ENCODE measurements at regions of chr3 and their contacts with region 1.

Region 1: GRCh38 chr3:72447059-72447946 is 400.9 kb downstream of the SHQ1 start:
- DNase-seq: peak; percentile 78 to 96 (median 89)
- H3K4me3 ChIP-seq: peak overlapping the region; percentile 61 to 96 (median 87)
- H3K27ac ChIP-seq: peak overlapping the region; percentile 45 to 96 (median 88)
- H3K27me3 ChIP-seq: no peaks in the 10 kb centered on the region
- CTCF ChIP-seq: peak in 3 of 56 donors; percentile 10 to 18 (median 11)

Region 2: GRCh38 chr3:71955240-71956068 is 491.8 kb before region 1 on chr3:
- intact Hi-C with region 1: loop called (anchors 5 to 10 kb)
- DNase-seq: peak; percentile 66 to 87 (median 84)
- H3K4me3 ChIP-seq: peak overlapping the region in 22 of 59 donors; percentile 3 to 44 (median 20)
- H3K27ac ChIP-seq: peak overlapping the region in 42 of 59 donors; percentile 3 to 86 (median 52)
- H3K27me3 ChIP-seq: no peaks in the 10 kb centered on the region
- CTCF ChIP-seq: peak; percentile 68 to 95 (median 88)

Region 3: GRCh38 chr3:72177083-72178050 is 269.9 kb before region 1 on chr3:
- intact Hi-C with region 1: loop called in 1 of 2 experiments (anchors 10 kb)
- DNase-seq: peak in 5 of 10 donors; percentile 34 to 52 (median 48)
- H3K4me3 ChIP-seq: peak overlapping the region in 52 of 59 donors; percentile 3 to 54 (median 31)
- H3K27ac ChIP-seq: peak overlapping the region in 55 of 59 donors; percentile 0 to 99 (median 71)
- H3K27me3 ChIP-seq: no peaks in the 10 kb centered on the region
- CTCF ChIP-seq: no peak

Region 4: DNA sequence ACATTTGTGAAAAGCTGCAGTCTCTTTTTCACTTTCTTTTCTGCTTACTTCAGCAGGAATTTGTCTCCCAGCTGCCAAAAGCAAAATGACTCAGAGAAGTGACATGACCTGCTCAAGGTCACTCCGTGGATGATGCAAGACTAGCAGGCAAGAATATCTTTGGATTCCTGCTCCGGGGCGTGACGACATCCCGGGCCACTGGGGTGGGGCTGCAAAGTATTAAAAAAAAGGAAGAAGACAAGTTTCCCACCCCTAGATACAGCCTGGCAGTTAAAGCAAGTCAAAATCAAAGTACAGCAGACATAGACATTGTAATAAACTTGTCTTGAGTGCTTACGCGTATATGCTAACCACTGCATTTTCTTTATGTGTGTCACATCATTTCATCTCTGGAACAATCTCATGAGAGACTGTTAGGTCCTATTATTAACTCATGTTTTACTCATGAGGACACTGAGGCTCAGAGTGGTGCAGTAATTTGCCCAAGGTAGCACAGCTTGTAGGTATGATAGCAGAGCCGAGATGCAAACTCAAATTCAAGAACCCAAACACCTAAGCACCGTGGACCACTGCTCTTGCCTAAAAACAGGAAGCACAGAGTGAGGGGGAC is 177.1 kb before region 1 on chr3:
- intact Hi-C with region 1: loop called (anchors 2 to 10 kb)
- DNase-seq: peak in 1 of 10 donors; percentile 31
- H3K4me3 ChIP-seq: no peak overlapping the region
- H3K27ac ChIP-seq: peak overlapping the region in 40 of 59 donors; percentile 0 to 99 (median 90)
- H3K27me3 ChIP-seq: no peaks in the 10 kb centered on the region
- CTCF ChIP-seq: no peak

Region 5: DNA sequence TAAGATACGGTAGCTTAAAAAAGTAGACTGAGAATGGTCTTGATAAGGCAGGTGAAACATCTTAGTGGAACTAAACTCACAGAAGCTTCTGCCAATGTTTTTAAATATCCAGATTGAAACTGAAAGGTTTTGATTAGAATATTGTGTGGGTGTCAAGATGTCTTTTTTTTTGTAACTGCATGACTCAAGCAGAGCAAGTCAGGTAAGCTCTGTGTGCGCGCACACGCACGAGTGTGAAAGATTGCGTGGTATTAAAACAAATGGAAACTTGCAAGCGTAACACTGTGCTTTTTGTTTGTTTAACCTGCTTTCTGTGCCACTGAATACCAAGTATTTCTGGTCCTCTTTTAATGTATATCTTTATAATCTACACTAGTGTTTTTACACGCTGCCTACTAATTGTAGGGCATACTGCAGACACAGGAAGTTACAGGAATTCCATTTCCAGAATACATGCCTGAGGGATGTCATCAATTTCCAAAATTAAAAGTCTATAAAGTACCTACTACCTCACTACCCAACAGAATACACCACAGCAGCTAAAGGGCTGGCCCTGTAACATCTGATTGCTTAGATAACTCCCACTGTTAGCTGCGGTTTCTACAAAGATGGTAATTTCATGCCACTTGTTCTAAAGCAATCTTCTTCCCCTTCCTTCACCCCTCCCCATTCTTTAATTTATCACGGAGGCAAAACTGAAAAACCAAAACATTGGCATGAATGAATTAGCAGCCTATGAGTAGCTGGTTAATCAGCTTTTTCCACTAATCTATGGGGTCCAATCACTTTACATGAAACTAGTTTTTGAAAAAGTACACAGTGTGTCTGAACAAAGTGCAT is 71.8 kb before region 1 on chr3:
- intact Hi-C with region 1: loop called (anchors 2 to 5 kb)
- DNase-seq: no peak
- H3K4me3 ChIP-seq: no peak overlapping the region
- H3K27ac ChIP-seq: peak overlapping the region in 55 of 59 donors; percentile 1 to 99 (median 94)
- H3K27me3 ChIP-seq: no peaks in the 10 kb centered on the region
- CTCF ChIP-seq: no peak

Region 6: GRCh38 chr3:72679540-72680198 is 232.4 kb after region 1 on chr3:
- intact Hi-C with region 1: no loop called
- DNase-seq: peak in 2 of 10 donors; percentile 41 to 49
- H3K4me3 ChIP-seq: no peak overlapping the region
- H3K27ac ChIP-seq: peak overlapping the region in 53 of 59 donors; percentile 7 to 88 (median 63)
- H3K27me3 ChIP-seq: no peaks in the 10 kb centered on the region
- CTCF ChIP-seq: no peak

Region 7: DNA sequence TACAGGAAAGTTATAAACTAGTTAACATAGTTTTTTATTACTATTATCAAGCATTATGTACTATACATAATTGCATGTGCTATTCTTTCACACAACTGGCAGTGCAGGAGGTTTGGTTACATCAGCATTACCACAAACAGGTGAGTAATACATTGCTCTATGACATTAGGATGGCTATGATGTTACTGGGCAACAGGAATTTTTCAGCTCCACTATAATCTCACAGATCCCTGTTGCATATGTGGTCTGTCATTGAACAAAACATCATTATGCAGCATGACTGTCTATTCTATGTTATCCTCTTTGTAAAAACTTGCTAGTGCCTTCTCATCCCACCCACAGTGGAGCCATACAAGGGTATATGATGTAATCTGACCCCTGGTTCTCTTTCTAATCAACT is 1214.0 kb after region 1 on chr3:
- intact Hi-C with region 1: no loop called
- DNase-seq: no peak
- H3K4me3 ChIP-seq: no peak overlapping the region
- H3K27ac ChIP-seq: no peak overlapping the region
- H3K27me3 ChIP-seq: peaks cover 0 to 3% (median 0%) of the 10 kb centered on the region in 45 donors
- CTCF ChIP-seq: no peak

Measured in dorsolateral prefrontal cortex (tissue), 120 donors.